CD14-positive monocyte (primary cell): ENCODE measurements at regions of chr5 and their contacts with region 1.

Region 1: DNA sequence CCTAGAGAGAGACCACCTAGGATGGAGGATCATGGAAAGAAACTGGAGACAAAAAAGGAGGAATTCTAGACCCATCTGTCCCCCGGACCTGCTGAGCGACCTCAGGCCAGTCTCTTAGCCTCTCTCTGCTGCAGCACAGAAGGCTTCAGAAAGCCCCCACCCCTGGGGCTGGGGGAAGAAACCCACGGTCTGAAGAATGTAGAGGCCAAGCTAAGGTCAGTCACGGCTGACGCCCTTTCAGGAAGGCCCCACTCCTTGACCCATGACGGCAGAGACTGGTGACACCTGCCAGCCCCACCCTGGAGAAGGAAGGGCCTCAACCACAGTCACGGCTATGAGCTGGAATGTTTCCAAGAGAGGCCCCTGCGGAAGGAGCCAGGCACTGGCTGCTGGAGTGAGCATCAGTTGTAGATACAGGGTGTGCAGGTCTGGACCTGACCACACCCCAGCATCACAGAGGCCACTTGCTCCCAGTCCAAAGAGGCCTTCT is 120.5 kb upstream of the BOD1 start:
- DNase-seq: peak; percentile 46 to 62 (median 52)
- H3K4me3 ChIP-seq: no peak overlapping the region
- H3K4me3 Mint-ChIP-seq: no peak overlapping the region
- H3K27ac ChIP-seq: no peak overlapping the region
- H3K27ac Mint-ChIP-seq: peak overlapping the region in 4 of 7 donors; percentile 33 to 81 (median 49)
- H3K4me1 ChIP-seq: peaks cover 20 to 36% of the 10 kb centered on the region in 2 donors
- H3K4me1 Mint-ChIP-seq: peaks cover 49% of the 10 kb centered on the region
- H3K27me3 ChIP-seq: no peaks in the 10 kb centered on the region
- H3K27me3 Mint-ChIP-seq: peaks cover 0 to 12% (median 0%) of the 10 kb centered on the region in 3 donors
- CTCF ChIP-seq: no peak

Region 2: GRCh38 chr5:173802670-173803165 is 65.8 kb after region 1 on chr5:
- intact Hi-C with region 1: loop called in 1 of 2 experiments (anchors 10 kb)
- DNase-seq: peak; percentile 89 to 97 (median 93)
- H3K4me3 ChIP-seq: peak overlapping the region in 1 of 3 experiments; percentile 54
- H3K4me3 Mint-ChIP-seq: peak overlapping the region in 1 of 2 donors; percentile 35
- H3K27ac ChIP-seq: peak overlapping the region; percentile 54 to 78
- H3K27ac Mint-ChIP-seq: peak overlapping the region; percentile 79 to 91 (median 84)
- H3K4me1 ChIP-seq: peaks cover 43% of the 10 kb centered on the region in 2 donors
- H3K4me1 Mint-ChIP-seq: peaks cover 31% of the 10 kb centered on the region
- H3K27me3 ChIP-seq: no peaks in the 10 kb centered on the region
- H3K27me3 Mint-ChIP-seq: peaks cover 0 to 2% (median 2%) of the 10 kb centered on the region in 3 donors
- CTCF ChIP-seq: no peak